Caco-2 (cell line): ENCODE measurements at regions of chr3 and their contacts with region 1.

Region 1: DNA sequence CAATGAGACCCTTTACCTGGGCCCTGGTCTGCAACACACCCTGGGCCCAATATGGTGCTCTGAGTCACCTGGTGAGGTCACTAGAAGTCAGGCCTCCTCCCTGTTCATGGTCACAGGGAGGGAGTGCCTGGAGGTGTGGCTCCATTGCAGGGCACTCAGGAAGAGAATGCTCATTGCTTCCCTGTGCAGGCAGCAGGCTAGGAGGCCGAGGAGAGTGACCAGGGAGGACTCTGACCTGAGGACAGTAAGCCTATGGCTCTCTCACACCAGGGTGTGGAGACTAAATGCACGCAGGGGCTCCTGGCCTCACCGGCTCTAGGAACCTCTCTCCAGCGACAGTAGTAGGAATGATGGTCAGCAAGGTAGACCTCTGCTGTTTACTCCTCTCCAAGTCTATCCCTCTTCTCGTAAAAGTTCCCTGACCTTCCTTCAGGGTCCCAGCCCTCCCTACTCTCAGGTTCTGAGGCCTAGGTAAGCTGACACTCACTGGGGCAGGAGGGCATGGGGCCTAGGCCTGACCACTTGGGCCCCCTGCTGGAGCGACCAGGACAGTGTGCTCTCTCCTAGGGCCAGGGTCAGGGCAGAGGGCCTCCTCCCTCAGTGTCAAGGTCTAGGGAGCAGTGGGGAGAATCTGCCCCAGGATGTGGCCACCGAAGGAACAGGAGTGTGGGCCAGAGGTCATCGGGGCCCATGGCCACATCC is 9.6 kb upstream of the SLCO2A1 start:
- DNase-seq: peak; percentile 54 to 79
- H3K4me3 ChIP-seq: no peak overlapping the region
- H3K4me3 Mint-ChIP-seq: no peak overlapping the region
- H3K27ac Mint-ChIP-seq: peak overlapping the region; percentile 51
- H3K4me1 ChIP-seq: peaks cover 16% of the 10 kb centered on the region
- H3K4me1 Mint-ChIP-seq: peaks cover 8% of the 10 kb centered on the region
- H3K27me3 ChIP-seq: no peaks in the 10 kb centered on the region
- H3K27me3 Mint-ChIP-seq: no peaks in the 10 kb centered on the region
- CTCF ChIP-seq: peak; percentile 19 to 35

Region 2: DNA sequence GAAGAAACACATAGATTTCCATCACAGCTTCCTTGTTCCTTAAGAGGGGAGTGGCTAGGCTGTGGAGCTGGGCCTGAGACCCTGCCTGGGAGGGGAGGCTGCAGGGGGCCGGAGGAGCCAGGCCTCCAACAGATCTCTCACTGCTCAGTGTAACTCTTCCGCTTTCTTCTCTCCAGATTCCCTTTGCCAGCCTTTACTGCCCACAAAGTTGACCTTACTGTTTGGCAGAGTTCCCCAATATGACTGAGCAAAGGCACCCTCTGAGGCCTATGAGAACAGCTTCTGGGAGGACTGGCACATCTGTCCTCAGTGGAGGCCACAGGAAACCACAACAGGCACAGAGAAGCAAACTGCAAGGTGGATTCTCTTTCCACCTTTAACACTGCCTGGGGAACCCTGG is 47.7 kb before region 1 on chr3:
- CTCF ChIA-PET with region 1: no interaction called
- POLR2A ChIA-PET with region 1: no interaction called
- intact Hi-C with region 1: loop called (anchors 5 kb)
- DNase-seq: no peak
- H3K4me3 ChIP-seq: no peak overlapping the region
- H3K4me3 Mint-ChIP-seq: no peak overlapping the region
- H3K27ac Mint-ChIP-seq: no peak overlapping the region
- H3K4me1 ChIP-seq: peaks cover 43% of the 10 kb centered on the region
- H3K4me1 Mint-ChIP-seq: peaks cover 40% of the 10 kb centered on the region
- H3K27me3 ChIP-seq: no peaks in the 10 kb centered on the region
- H3K27me3 Mint-ChIP-seq: no peaks in the 10 kb centered on the region
- CTCF ChIP-seq: no peak

Region 3: GRCh38 chr3:134348524-134348923 is 309.2 kb after region 1 on chr3:
- CTCF ChIA-PET with region 1: no interaction called
- POLR2A ChIA-PET with region 1: no interaction called
- intact Hi-C with region 1: no loop called
- DNase-seq: peak in 1 of 2 experiments; percentile 34
- H3K4me3 ChIP-seq: no peak overlapping the region
- H3K4me3 Mint-ChIP-seq: no peak overlapping the region
- H3K27ac Mint-ChIP-seq: peak overlapping the region; percentile 65
- H3K4me1 ChIP-seq: peaks cover 59% of the 10 kb centered on the region
- H3K4me1 Mint-ChIP-seq: peaks cover 60% of the 10 kb centered on the region
- H3K27me3 ChIP-seq: no peaks in the 10 kb centered on the region
- H3K27me3 Mint-ChIP-seq: no peaks in the 10 kb centered on the region
- CTCF ChIP-seq: no peak